CD14-positive monocyte (primary cell): ENCODE measurements at regions of chr1 and their contacts with region 1.

Region 1: DNA sequence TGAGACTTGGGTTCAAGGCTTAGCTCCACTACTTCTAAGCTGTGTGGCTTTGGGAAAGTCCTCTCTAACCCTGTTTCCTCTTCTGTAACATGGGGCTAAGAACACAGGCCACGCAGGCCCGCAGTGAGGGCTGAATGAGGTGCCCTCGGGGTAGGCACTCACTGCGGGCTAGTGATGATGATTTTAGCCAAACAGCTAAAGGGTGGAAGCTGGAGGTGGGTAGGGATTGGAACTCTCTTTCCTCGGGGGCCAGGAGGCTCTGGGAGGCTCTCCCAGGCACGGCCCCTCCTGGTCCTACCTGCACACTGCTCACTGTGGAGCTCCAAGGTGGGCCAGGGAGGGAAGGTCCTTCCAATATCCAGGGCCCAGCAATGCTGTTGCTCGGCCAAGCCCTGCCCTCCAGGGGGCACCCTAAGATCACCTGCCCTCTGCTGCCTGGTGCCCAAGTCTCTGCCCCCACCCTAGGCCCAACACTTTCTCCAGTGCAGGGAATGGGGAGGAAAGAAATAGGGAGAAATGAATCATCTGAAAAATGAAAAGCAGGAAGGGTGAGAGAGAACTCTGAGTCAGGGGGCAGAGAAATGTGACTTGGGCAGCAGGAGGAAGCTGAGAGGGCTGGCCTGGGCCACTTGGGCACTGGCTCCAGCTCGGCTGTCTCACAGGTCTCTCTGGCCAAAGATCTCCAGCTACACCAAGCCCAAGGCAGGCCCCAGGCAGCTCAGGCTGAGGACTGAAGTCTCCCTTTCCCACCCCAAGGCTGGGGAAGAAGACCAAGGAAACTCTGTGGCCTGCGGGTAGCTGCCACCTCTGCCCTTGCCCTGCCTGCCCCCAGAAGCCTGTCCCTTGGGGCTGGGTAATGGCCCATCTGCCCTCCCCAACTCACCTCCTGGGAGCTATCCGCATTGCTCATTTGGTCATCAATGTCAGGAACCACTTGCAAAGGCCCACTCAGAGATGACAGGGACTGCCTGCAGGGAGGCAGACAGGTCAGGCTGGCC is 19.3 kb upstream of the EVA1B start:
- DNase-seq: peak; percentile 42 to 67 (median 53)
- H3K4me3 ChIP-seq: no peak overlapping the region
- H3K4me3 Mint-ChIP-seq: no peak overlapping the region
- H3K27ac ChIP-seq: peak overlapping the region; percentile 4 to 56
- H3K27ac Mint-ChIP-seq: peak overlapping the region in 6 of 7 donors; percentile 22 to 84 (median 41)
- H3K4me1 ChIP-seq: peaks cover 13 to 16% of the 10 kb centered on the region in 2 donors
- H3K4me1 Mint-ChIP-seq: peaks cover 20% of the 10 kb centered on the region
- H3K27me3 ChIP-seq: no peaks in the 10 kb centered on the region
- H3K27me3 Mint-ChIP-seq: no peaks in the 10 kb centered on the region
- CTCF ChIP-seq: peak; percentile 75

Region 2: DNA sequence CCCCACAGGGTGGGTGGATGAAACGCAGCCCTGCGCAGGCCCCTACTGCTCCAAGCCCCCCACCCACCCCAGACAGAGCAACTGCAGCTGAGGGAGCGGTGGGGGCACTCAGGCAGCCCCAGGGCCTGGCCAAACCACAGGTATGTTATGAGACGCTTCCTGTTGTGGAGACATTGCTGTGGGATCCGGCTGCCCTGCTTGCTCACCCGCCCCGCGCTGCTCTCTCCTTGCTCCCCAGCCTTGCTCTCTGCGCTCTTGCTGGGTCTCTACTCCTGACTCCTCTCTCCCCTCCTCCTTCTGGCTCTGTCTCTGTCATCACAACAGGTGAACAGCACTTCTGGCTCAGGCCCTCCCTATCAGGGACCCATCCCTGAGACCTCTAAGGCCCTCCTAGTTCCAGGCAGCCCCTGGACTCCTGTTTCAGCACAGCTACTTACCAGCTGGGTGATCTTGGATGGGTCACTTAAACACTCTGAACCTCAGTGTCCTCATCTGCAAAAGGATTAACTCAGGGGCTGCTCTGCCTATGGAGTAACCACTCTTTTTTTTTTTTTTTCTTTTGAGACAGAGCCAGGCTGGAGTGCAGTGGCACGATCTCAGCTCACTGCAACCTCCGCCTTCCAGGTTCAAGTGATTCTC is 233.6 kb before region 1 on chr1:
- intact Hi-C with region 1: no loop called
- DNase-seq: no peak
- H3K4me3 ChIP-seq: no peak overlapping the region
- H3K4me3 Mint-ChIP-seq: no peak overlapping the region
- H3K27ac ChIP-seq: no peak overlapping the region
- H3K27ac Mint-ChIP-seq: no peak overlapping the region
- H3K4me1 ChIP-seq: no peaks in the 10 kb centered on the region
- H3K4me1 Mint-ChIP-seq: peaks cover 5% of the 10 kb centered on the region
- H3K27me3 ChIP-seq: no peaks in the 10 kb centered on the region
- H3K27me3 Mint-ChIP-seq: peaks cover 2 to 6% (median 5%) of the 10 kb centered on the region in 3 donors
- CTCF ChIP-seq: no peak

Region 3: DNA sequence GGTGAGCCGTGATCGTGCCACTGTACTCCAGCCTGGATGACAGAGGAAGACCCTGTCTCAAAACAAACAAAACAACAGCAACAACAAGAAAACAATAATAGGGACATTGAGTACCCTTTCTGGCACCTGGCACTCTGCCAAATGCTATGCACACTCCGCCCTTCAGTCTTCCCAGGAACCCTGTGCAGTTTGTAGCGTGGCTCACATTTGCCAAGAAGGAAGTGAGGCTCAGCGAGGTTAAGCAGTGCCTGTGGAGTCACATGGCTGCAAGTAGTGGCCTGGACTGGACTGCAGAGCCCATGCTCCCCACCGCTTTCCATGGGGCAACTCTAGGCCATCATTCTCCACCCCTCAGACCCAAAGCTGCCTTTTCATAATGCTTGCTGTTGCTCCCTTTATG is 14.1 kb before region 1 on chr1:
- intact Hi-C with region 1: loop called in 1 of 2 experiments (anchors 1 kb)
- DNase-seq: peak in 1 of 3 donors; percentile 56
- H3K4me3 ChIP-seq: no peak overlapping the region
- H3K4me3 Mint-ChIP-seq: no peak overlapping the region
- H3K27ac ChIP-seq: no peak overlapping the region
- H3K27ac Mint-ChIP-seq: no peak overlapping the region
- H3K4me1 ChIP-seq: peaks cover 12 to 20% of the 10 kb centered on the region in 2 donors
- H3K4me1 Mint-ChIP-seq: peaks cover 18% of the 10 kb centered on the region
- H3K27me3 ChIP-seq: peaks cover 0 to 3% of the 10 kb centered on the region in 2 donors
- H3K27me3 Mint-ChIP-seq: peaks cover 9 to 21% (median 15%) of the 10 kb centered on the region in 3 donors
- CTCF ChIP-seq: no peak

Region 4: DNA sequence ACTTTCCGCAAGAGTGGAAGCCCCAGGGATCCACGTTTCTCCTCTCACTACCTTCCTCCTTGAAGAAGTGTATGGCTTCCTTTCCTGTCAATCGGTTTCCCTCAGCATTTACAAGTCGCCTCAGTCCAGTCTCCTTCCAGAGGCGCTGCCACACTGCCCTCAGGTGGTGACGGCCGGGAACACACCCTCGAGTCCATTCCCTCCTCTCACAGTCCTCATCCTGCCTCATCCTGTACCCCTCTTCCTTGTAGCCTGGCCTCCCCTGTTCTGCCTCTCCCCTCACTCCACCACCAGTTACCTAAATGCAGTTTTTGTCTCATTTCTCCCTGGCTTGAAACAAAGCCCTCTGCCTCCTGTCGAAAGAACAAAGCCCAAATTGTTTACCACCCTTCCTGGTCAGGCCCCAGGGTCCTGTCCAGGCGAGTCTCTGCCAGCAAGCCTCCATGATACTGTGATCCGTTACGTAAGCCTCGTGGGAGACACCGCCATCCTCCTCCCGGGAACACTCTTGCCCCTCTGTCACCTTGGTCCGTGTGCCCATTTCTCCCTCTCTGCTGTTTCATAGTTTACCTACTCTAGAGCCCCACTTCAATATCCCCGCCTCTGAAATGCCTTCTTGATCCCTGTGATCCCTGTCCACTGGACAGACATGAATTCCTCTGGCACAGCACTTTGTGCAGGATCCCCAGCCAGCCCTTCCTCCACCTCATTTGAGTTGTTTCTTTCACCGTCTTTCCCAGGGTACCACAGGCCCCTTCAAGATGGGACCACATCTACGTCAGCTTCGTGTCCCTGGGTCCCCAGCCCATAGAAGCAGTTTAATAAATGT is 78.3 kb after region 1 on chr1:
- intact Hi-C with region 1: loop called (anchors 2 kb)
- DNase-seq: peak; percentile 80 to 90 (median 84)
- H3K4me3 ChIP-seq: no peak overlapping the region
- H3K4me3 Mint-ChIP-seq: peak overlapping the region in 1 of 2 donors; percentile 19
- H3K27ac ChIP-seq: no peak overlapping the region
- H3K27ac Mint-ChIP-seq: peak overlapping the region in 6 of 7 donors; percentile 32 to 86 (median 72)
- H3K4me1 ChIP-seq: peaks cover 4 to 5% of the 10 kb centered on the region in 2 donors
- H3K4me1 Mint-ChIP-seq: peaks cover 8% of the 10 kb centered on the region
- H3K27me3 ChIP-seq: no peaks in the 10 kb centered on the region
- H3K27me3 Mint-ChIP-seq: peaks cover 0 to 1% (median 0%) of the 10 kb centered on the region in 3 donors
- CTCF ChIP-seq: peak; percentile 88